Left ventricle myocardium inferior (tissue), 1 donor: ENCODE measurements at regions of chr10 and their contacts with region 1.

Region 1: GRCh38 chr10:80924063-80924952 is 386.6 kb downstream of the SH2D4B start:
- DNase-seq: no peak
- H3K4me3 ChIP-seq: no peak overlapping the region
- H3K27ac ChIP-seq: no peak overlapping the region
- H3K4me1 ChIP-seq: no peaks in the 10 kb centered on the region
- H3K27me3 ChIP-seq: peaks cover 34% of the 10 kb centered on the region
- CTCF ChIP-seq: peak; percentile 77

Region 2: DNA sequence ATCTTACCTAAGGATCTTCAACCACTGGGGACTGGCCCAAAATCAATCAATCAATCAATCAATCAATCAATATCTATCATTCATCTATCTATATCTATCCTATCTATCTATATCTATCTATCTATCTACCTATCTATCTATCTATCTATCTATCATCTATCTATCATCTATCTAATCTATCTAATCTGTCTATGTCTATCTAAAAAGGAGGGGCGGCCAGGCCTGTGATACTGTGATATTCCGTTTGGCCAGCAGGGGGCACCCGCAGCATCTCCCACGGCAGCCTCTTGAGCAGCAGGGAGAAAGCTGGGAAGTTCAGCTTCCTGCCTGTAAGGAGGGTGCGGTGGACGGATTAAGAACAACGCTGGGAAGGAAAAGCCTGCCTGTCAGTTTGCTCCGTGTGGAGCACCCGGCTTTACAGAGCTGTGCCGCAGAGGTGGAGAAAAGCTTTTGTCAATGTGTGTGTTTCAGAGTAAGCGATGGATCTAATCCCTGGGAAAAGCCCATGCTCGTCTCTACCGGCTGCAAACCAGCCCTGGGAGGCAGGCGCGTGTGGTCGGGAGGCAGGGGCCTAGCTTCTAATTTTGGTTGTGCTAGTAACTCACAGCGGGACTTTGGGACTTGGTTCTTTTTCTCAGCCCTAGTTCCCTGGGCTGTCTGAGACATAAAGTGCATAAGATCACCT is 261.6 kb before region 1 on chr10:
- intact Hi-C with region 1: loop called (anchors 10 kb)
- DNase-seq: peak; percentile 83
- H3K4me3 ChIP-seq: peak overlapping the region; percentile 59
- H3K27ac ChIP-seq: peak overlapping the region; percentile 86
- H3K4me1 ChIP-seq: peaks cover 16% of the 10 kb centered on the region
- H3K27me3 ChIP-seq: peaks cover 10% of the 10 kb centered on the region
- CTCF ChIP-seq: peak; percentile 88